Right ventricle myocardium superior (tissue), 1 donor: ENCODE measurements at regions of chr2 and their contacts with region 1.

Region 1: GRCh38 chr2:130797493-130798435 is 39.0 kb upstream of the ARHGEF4 start:
- DNase-seq: peak; percentile 95
- ATAC-seq: peak; percentile 98

Region 2: GRCh38 chr2:130873700-130874346 is 76.1 kb after region 1 on chr2:
- intact Hi-C with region 1: loop called (anchors 2 kb)
- DNase-seq: peak; percentile 65
- ATAC-seq: peak; percentile 79

Region 3: DNA sequence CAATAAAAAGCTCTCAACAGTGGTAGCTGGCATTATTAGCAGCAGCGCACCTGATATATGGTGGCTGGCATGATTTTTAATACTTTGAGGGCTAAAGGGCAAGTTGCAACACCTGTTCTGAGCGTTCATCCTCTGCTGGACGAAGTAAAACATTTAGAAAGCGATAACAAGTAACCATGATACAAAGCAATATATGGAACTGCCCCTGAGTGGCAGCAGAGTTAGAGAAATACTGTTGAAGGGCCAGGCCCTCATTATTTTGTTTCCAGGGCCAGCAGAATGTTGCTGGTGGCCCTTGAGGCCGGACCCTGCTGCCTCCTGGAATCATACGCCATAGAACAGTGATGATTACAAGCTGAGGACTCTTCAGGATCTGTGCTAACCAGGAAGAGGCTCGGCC is 86.7 kb after region 1 on chr2:
- intact Hi-C with region 1: no loop called
- DNase-seq: no peak
- ATAC-seq: no peak

Region 4: DNA sequence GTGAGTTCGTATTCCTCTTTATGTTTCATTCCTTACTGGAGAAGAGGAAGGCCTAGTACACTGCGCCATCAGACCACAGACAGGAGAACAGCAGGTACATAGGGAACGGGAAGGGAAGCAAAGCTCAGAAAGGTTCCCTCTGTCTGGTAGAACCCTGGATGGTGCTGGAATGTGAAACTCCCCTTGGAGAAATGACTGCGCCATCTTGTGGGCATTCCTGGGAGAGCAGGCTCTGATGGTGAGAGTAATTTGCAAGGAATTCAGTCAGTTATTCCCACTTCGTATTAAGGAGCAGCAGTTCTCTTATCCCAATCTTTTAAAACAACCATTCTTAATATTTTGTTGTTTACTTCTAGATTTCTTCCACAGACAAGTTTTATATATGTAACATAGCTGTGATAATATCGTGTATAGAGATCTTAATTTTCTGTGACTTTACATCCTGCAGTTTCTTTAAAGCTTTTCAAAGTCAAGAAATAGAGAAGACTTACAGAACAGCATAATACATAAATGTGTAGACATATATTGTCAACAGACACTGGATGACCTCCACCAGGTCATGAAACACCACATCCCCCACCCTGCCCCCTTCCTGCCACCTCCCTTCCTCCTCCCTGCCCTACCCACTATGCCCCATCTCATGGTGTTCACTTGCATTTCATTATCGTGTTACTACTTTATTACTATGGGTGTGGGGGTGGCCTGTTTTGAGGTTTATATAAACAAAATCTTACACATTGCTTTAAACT is 122.8 kb after region 1 on chr2:
- intact Hi-C with region 1: loop called (anchors 5 kb)
- DNase-seq: peak; percentile 59
- ATAC-seq: peak; percentile 56